ENCODE measurements at regions of chr18 and their contacts with region 1.

Region 1: DNA sequence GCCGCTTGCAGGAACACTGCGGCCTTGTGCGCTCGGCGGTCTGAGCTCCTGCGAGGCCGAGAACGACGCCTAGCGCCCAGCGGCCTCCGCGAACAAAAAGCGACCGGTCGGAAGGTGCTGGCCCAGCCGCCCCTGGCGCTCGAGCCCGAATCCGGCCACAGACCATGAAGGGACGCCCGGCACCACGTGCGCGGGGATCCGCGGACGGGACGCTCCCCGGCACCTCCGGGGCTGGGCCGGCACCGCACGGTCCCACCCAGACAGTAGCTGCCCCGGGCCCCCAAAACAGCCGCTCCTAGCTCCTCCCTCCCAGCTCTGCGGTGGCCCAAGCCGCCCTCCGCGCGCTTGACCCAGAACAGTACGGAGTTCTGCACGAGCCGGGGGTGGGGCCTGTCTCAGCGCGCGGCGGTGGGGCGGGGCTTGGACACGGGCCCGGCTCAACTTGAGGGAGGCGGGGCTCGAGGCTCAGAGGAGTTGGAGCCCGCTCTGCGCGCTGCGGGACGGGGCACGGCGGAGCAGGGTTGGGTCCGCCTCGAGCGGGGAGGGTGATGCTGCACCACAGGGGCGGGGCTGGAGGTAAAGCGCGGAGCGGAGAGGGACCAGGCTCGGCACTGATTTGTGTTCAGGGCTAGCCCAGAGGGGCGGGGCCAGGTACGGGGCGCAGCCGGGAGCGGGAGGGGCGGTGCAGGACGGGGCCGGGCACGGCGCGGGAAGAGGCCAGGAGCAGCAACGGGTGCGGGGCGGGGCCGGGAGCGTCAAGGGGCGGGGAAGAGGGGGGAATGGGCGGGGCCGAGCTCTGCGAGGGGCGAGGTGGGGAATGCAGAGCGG is 538 bp upstream of the IMPA2 start:
- DNase-seq: peak; percentile 95
- ATAC-seq: peak; percentile 96
- H3K4me3 Mint-ChIP-seq: peak overlapping the region; percentile 81
- H3K27ac Mint-ChIP-seq: peak overlapping the region; percentile 63
- H3K4me1 Mint-ChIP-seq: peaks cover 16% of the 10 kb centered on the region
- H3K27me3 Mint-ChIP-seq: peaks cover 6% of the 10 kb centered on the region

Region 2: GRCh38 chr18:11947214-11948191 is 33.3 kb before region 1 on chr18:
- POLR2A ChIA-PET with region 1: interaction called, 10 read pairs
- DNase-seq: peak; percentile 58
- ATAC-seq: peak; percentile 82
- H3K4me3 Mint-ChIP-seq: peak overlapping the region; percentile 78
- H3K27ac Mint-ChIP-seq: peak overlapping the region; percentile 56
- H3K4me1 Mint-ChIP-seq: peaks cover 6% of the 10 kb centered on the region
- H3K27me3 Mint-ChIP-seq: peaks cover 3% of the 10 kb centered on the region

Measured in activated naive CD8-positive, alpha-beta T cell treated with anti-CD3 and anti-CD28 coated beads, Interleukin-2, amount 10 ng/mL, durations not matched to agents 7 days and 5 days (primary cell).